T-cell (primary cell): ENCODE measurements at regions of chr12 and their contacts with region 1.

Region 1: DNA sequence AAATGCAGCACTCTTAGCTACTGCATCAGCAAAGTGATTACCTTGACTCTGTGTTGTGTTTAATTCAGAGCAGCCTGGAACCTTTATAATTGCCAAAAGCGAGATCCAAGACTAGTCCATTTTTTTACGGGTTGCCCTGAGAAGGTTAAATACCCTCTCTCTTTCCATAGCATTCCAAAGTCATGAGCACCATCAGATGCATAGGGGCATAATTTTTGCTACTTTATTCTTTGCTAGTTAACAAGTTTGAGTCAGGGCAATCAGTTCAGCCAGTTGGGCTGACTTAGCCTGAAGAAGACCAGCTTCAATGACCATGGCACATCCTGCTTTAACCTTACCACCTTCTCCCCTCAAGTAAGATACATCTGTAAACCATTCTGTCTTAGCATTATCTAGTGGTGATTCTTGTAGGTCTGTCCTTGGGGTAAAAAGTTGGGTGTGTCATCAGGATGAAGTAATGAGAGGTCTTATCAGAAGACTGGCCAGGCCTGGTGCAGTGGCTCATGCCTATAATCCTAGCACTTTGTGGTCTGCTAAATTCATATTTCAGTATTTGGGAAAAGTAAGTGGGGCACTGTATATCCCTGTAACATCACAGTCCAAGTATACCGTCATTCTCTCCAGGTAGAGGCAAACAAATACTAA is 19.2 kb downstream of the SINHCAF start:
- DNase-seq: no peak
- ATAC-seq: no peak
- H3K4me3 ChIP-seq: no peak overlapping the region
- H3K4me3 Mint-ChIP-seq: no peak overlapping the region
- H3K27ac ChIP-seq: no peak overlapping the region
- H3K27ac Mint-ChIP-seq: no peak overlapping the region
- H3K4me1 ChIP-seq: no peaks in the 10 kb centered on the region
- H3K4me1 Mint-ChIP-seq: peaks cover 56 to 78% (median 64%) of the 10 kb centered on the region in 3 donors
- H3K27me3 ChIP-seq: no peaks in the 10 kb centered on the region
- H3K27me3 Mint-ChIP-seq: no peaks in the 10 kb centered on the region

Region 2: GRCh38 chr12:31651893-31652521 is 345.3 kb after region 1 on chr12:
- CTCF ChIA-PET with region 1: interaction called in 1 of 2 experiments, 14 read pairs
- POLR2A ChIA-PET with region 1: interaction called in 1 of 2 experiments, 10 read pairs
- DNase-seq: no peak
- ATAC-seq: no peak
- H3K4me3 ChIP-seq: no peak overlapping the region
- H3K4me3 Mint-ChIP-seq: peak overlapping the region in 2 of 3 donors; percentile 44 to 50
- H3K27ac ChIP-seq: no peak overlapping the region
- H3K27ac Mint-ChIP-seq: peak overlapping the region; percentile 91 to 96
- H3K4me1 ChIP-seq: peaks cover 2 to 5% of the 10 kb centered on the region in 2 experiments
- H3K4me1 Mint-ChIP-seq: peaks cover 8 to 14% (median 10%) of the 10 kb centered on the region in 3 donors
- H3K27me3 ChIP-seq: no peaks in the 10 kb centered on the region
- H3K27me3 Mint-ChIP-seq: no peaks in the 10 kb centered on the region